ENCODE measurements at regions of chr2 and their contacts with region 1.

Region 1: DNA sequence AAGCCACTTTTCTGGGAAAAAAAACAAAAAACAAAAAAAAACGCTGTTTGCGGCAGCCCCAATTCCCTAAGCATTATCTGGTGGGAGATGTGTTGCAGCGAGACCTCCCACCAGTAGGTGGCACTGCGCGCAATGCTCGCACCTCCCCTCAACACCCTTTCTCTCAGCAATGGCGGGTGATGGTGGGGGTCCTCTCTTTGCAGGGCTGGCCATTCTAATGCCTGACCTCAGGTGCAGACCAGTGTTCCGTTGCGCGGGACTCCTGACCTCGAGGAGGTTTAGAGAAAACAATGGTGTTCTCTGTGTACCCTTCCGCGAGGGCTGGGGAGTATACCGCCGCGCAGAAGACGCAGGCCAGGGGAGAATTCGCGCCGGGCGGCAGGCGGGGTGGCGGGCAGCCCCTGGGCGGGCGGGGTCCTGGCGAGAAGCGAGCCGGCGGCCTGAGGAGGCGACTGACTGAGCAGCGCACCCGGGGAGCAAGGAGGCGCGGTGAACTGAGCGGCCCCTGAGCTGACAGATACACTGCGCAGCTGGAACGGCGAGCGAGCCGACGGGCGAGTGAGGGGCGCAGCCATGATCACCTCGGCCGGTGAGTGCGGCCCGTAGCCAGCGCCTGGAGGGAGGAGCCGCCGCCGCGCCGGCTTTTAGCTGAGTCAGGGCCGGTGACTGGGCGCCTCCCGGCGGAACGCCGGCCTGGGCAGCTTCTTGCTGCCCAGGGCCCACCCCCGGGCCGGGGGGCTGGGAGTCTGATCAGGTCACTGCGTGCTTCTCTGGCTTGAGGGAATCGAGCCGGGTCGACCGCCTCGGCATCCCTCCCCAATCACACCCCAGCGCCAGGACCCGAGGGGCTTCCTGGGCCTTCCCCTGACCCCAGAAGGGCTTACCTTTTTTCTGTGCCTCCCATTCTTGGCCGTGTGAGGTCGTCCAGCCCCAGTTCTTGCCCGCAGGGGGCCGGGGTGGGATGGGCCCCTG is at the start of gene PSMD1:
- DNase-seq: peak; percentile 96
- ATAC-seq: peak; percentile 77
- H3K4me3 Mint-ChIP-seq: peak within 1 kb of the TSS; percentile 80
- H3K27ac Mint-ChIP-seq: peak within 1 kb of the TSS; percentile 100
- H3K4me1 Mint-ChIP-seq: peaks cover 51% of the 10 kb centered on the region
- H3K27me3 Mint-ChIP-seq: peaks cover 2% of the 10 kb centered on the region
- total RNA-seq, gene PSMD1: 112 to 160 TPM

Region 2: DNA sequence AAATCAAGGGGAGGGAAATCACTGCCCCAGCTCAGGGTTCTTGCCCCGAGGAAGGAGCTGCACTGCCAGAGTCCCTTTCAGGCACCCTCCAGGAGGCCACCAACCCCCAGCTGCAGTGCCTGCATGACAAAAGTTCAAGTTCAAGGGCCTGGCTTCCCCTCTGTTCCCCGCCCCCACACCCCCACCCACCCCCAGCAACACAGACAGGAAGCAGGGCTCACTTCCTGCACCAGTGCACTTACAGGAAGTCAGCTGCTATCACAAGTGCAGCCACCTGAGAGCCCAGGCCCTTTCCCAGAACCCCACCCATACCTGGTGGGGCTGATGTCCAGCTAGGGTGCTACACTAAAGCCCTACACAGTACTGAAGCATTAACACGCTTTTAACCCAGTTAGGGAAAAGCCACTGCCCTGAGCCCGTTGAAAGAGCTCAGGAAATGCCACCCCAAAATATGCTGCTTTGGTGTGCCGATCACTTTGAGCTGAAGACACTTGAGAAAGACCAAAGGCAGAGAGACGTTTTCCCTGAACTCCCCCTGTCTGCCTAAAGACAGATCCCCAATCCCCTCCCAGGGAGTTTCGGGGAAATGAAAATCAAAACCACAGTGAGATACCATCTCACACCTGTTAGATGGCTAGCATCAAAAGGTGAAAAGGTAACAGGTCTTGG is 454.0 kb before region 1 on chr2:
- CTCF ChIA-PET with region 1: no interaction called
- POLR2A ChIA-PET with region 1: no interaction called
- intact Hi-C with region 1: no loop called
- DNase-seq: peak; percentile 71
- ATAC-seq: peak; percentile 83
- H3K4me3 Mint-ChIP-seq: peak overlapping the region; percentile 6
- H3K27ac Mint-ChIP-seq: peak overlapping the region; percentile 89
- H3K4me1 Mint-ChIP-seq: peaks cover 48% of the 10 kb centered on the region
- H3K27me3 Mint-ChIP-seq: no peaks in the 10 kb centered on the region

Region 3: GRCh38 chr2:230712443-230713330 is 344.1 kb before region 1 on chr2 and contains the start of gene CAB39:
- CTCF ChIA-PET with region 1: interaction called, 3 read pairs
- POLR2A ChIA-PET with region 1: no interaction called
- intact Hi-C with region 1: loop called in 1 of 2 experiments (anchors 2 kb)
- DNase-seq: peak; percentile 93
- ATAC-seq: peak; percentile 83
- H3K4me3 Mint-ChIP-seq: peak within 1 kb of the TSS; percentile 94
- H3K27ac Mint-ChIP-seq: peak within 1 kb of the TSS; percentile 95
- H3K4me1 Mint-ChIP-seq: peaks cover 38% of the 10 kb centered on the region
- H3K27me3 Mint-ChIP-seq: no peaks in the 10 kb centered on the region
- total RNA-seq, gene CAB39: 122 to 148 TPM

Region 4: GRCh38 chr2:230864598-230865306 is 192.0 kb before region 1 on chr2 and contains the start of gene ITM2C:
- CTCF ChIA-PET with region 1: interaction called, 3 read pairs
- POLR2A ChIA-PET with region 1: no interaction called
- intact Hi-C with region 1: loop called in 1 of 2 experiments (anchors 1 kb)
- DNase-seq: peak; percentile 89
- ATAC-seq: peak; percentile 86
- H3K4me3 Mint-ChIP-seq: peak within 1 kb of the TSS; percentile 84
- H3K27ac Mint-ChIP-seq: peak within 1 kb of the TSS; percentile 82
- H3K4me1 Mint-ChIP-seq: peaks cover 50% of the 10 kb centered on the region
- H3K27me3 Mint-ChIP-seq: peaks cover 5% of the 10 kb centered on the region
- total RNA-seq, gene ITM2C: 29.6 to 32.9 TPM

Region 5: GRCh38 chr2:230987137-230988020 is 69.4 kb before region 1 on chr2:
- CTCF ChIA-PET with region 1: interaction called, 5 read pairs
- POLR2A ChIA-PET with region 1: no interaction called
- intact Hi-C with region 1: loop called in 1 of 2 experiments (anchors 2 kb)
- DNase-seq: peak; percentile 88
- ATAC-seq: peak; percentile 34
- H3K4me3 Mint-ChIP-seq: peak overlapping the region; percentile 67
- H3K27ac Mint-ChIP-seq: no peak overlapping the region
- H3K4me1 Mint-ChIP-seq: peaks cover 36% of the 10 kb centered on the region
- H3K27me3 Mint-ChIP-seq: peaks cover 16% of the 10 kb centered on the region

Region 6: GRCh38 chr2:231463698-231464575 is 407.2 kb after region 1 on chr2 and contains the start of gene NCL:
- CTCF ChIA-PET with region 1: no interaction called
- POLR2A ChIA-PET with region 1: no interaction called
- intact Hi-C with region 1: loop called in 1 of 2 experiments (anchors 1 kb)
- DNase-seq: peak; percentile 92
- ATAC-seq: peak; percentile 93
- H3K4me3 Mint-ChIP-seq: peak within 1 kb of the TSS; percentile 98
- H3K27ac Mint-ChIP-seq: peak within 1 kb of the TSS; percentile 99
- H3K4me1 Mint-ChIP-seq: peaks cover 42% of the 10 kb centered on the region
- H3K27me3 Mint-ChIP-seq: no peaks in the 10 kb centered on the region
- total RNA-seq, gene NCL: 1,311 to 1,332 TPM

Region 7: GRCh38 chr2:231706731-231707624 is 650.2 kb after region 1 on chr2:
- CTCF ChIA-PET with region 1: no interaction called
- POLR2A ChIA-PET with region 1: no interaction called
- intact Hi-C with region 1: loop called in 1 of 2 experiments (anchors 1 kb)
- DNase-seq: peak; percentile 99
- ATAC-seq: peak; percentile 59
- H3K4me3 Mint-ChIP-seq: peak overlapping the region; percentile 85
- H3K27ac Mint-ChIP-seq: peak overlapping the region; percentile 100
- H3K4me1 Mint-ChIP-seq: peaks cover 15% of the 10 kb centered on the region
- H3K27me3 Mint-ChIP-seq: peaks cover 2% of the 10 kb centered on the region

Measured in activated CD4-positive, alpha-beta T cell treated with anti-CD3 and anti-CD28 coated beads for 36 hours (primary cell).